ENCODE measurements at regions of chr1 and their contacts with region 1.

Region 1: GRCh38 chr1:244815600-244816099 is 19.8 kb upstream of the COX20 start:
- DNase-seq: no peak
- H3K4me3 ChIP-seq: no peak overlapping the region
- H3K27me3 ChIP-seq: peaks cover 5% of the 10 kb centered on the region
- CTCF ChIP-seq: no peak

Region 2: DNA sequence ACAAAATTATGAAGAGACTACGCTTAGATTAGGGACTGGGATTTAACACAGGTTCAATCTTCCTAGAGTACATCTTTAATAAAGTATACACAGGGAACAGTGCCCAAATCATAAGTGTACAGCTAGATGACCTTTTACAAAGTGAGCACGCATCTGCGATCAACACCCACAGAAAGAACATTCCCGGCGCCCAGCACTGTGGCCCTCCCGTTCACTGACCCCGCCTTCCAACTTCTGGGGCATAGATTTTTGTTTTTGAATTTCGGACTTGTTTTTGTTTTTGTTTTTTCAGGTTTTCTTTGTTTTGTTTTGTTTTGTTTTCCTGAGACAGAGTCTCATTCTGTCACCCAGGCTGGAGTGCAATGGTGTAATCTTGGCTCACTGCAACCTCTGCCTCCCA is 10.8 kb before region 1 on chr1:
- CTCF ChIA-PET with region 1: interaction called, 13 read pairs
- POLR2A ChIA-PET with region 1: interaction called, 13 read pairs
- DNase-seq: no peak
- H3K4me3 ChIP-seq: no peak overlapping the region
- H3K27me3 ChIP-seq: no peaks in the 10 kb centered on the region
- CTCF ChIP-seq: no peak